ENCODE measurements at regions of chr9 and their contacts with region 1.

Region 1: GRCh38 chr9:72280913-72281500 is 84.0 kb downstream of the ZFAND5 start:
- DNase-seq: no peak
- H3K4me3 ChIP-seq: no peak overlapping the region
- H3K27ac ChIP-seq: no peak overlapping the region
- H3K27me3 ChIP-seq: peaks cover 8% of the 10 kb centered on the region
- CTCF ChIP-seq: peak; percentile 99

Region 2: DNA sequence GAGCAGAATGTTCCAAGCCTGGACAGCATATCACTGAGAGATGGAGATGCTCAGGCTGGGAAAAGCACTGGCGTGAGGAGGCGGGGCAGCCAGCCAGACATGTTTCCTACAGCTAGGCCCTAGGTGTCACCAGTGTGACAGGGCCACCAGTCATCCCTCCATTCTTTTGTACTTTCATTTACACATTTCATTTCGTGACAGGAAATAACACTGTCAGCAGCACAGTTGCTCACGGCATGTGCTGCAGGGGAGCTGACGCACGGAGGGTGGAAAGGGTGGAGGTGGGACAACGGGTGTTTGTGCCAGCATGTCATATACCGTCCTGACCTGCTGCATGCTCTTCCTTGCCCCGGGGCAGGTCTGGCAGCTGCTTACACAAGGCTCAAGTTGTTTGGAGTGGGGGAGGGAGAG is 497.9 kb before region 1 on chr9:
- CTCF ChIA-PET with region 1: no interaction called
- POLR2A ChIA-PET with region 1: no interaction called
- DNase-seq: no peak
- H3K4me3 ChIP-seq: no peak overlapping the region
- H3K27ac ChIP-seq: no peak overlapping the region
- H3K27me3 ChIP-seq: no peaks in the 10 kb centered on the region
- CTCF ChIP-seq: no peak

Region 3: GRCh38 chr9:72292256-72292682 is 11.3 kb after region 1 on chr9:
- CTCF ChIA-PET with region 1: interaction called, 61 read pairs
- POLR2A ChIA-PET with region 1: no interaction called
- DNase-seq: no peak
- H3K4me3 ChIP-seq: no peak overlapping the region
- H3K27ac ChIP-seq: no peak overlapping the region
- H3K27me3 ChIP-seq: peaks cover 6% of the 10 kb centered on the region
- CTCF ChIP-seq: peak; percentile 54

Region 4: DNA sequence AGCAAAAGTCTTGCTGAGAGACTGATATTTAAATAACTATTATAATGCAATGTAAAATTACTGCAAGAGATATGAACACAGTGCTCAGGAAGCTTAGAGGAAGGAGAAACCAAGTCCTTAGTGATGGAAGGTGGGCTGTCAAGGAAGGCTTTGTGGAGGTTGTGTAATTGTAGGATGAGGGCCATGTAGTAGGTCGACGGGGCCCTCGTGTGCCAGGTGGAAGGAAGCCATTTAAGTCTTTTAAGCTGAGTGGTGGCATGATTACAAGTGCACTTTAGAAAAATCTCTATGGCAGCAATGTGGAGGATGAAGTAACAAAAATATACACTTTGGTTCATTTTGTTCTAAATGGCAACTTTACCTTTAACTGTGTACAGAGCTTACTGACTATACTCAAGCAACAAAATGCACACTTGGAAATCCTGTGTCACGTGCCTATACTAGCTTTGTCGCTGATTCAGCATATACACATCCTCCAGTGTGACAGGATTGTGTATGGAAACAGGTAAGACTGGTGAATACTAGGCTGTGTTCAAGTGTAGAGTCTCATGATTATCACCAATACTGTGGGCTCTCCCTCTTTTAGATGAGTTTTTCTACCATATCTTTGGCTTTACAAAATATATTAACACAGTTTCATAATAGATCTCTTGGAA is 319.0 kb after region 1 on chr9:
- CTCF ChIA-PET with region 1: interaction called, 13 read pairs
- POLR2A ChIA-PET with region 1: no interaction called
- DNase-seq: no peak
- H3K4me3 ChIP-seq: no peak overlapping the region
- H3K27ac ChIP-seq: no peak overlapping the region
- H3K27me3 ChIP-seq: no peaks in the 10 kb centered on the region
- CTCF ChIP-seq: no peak

Region 5: GRCh38 chr9:72753266-72753893 is 472.4 kb after region 1 on chr9:
- CTCF ChIA-PET with region 1: interaction called, 124 read pairs
- POLR2A ChIA-PET with region 1: no interaction called
- DNase-seq: no peak
- H3K4me3 ChIP-seq: no peak overlapping the region
- H3K27ac ChIP-seq: no peak overlapping the region
- H3K27me3 ChIP-seq: no peaks in the 10 kb centered on the region
- CTCF ChIP-seq: peak; percentile 46

Region 6: DNA sequence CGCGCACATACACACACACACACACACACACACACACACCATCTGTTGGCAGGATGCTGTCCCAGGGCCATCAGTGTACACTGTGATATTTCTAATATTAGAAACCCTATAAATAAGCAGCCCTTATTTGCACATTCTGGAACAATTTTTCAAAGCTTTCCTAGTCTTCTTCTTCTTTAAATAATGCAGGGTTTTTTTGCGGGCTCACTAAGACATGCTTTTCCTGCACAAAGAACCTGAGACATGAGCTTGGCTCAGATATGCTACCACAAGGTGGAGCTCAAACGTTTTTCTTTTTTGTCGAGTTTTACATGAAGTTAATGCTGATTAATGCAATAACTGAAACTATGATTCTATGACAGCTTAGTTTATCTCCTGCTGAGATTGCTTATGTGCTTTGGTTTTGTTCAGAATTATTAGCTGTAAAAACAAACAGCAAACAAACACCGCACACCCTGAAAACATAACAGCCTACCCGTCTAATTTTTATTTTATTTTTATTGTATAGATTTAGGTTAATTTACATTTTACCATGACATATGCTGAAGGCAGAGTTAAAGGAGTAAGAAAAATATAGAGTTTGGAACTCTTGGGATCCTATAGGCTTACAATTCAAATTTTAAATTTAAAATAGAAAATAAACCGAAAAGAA is 576.1 kb after region 1 on chr9:
- CTCF ChIA-PET with region 1: interaction called, 19 read pairs
- POLR2A ChIA-PET with region 1: no interaction called
- DNase-seq: peak; percentile 16
- H3K4me3 ChIP-seq: no peak overlapping the region
- H3K27ac ChIP-seq: no peak overlapping the region
- H3K27me3 ChIP-seq: no peaks in the 10 kb centered on the region
- CTCF ChIP-seq: peak; percentile 70